B cell (primary cell): ENCODE measurements at regions of chr6 and their contacts with region 1.

Region 1: GRCh38 chr6:53171605-53172446 is 23.2 kb upstream of the GCM1 start:
- DNase-seq: peak; percentile 93
- ATAC-seq: peak; percentile 99
- H3K4me3 ChIP-seq: peak overlapping the region in 3 of 5 experiments; percentile 29 to 40 (median 34)
- H3K4me3 Mint-ChIP-seq: peak overlapping the region; percentile 65
- H3K27ac ChIP-seq: peak overlapping the region; percentile 76 to 88
- H3K27ac Mint-ChIP-seq: peak overlapping the region; percentile 81
- H3K4me1 ChIP-seq: peaks cover 28 to 30% of the 10 kb centered on the region in 2 donors
- H3K4me1 Mint-ChIP-seq: peaks cover 24% of the 10 kb centered on the region
- H3K27me3 ChIP-seq: no peaks in the 10 kb centered on the region
- H3K27me3 Mint-ChIP-seq: no peaks in the 10 kb centered on the region
- CTCF ChIP-seq: peak; percentile 100

Region 2: DNA sequence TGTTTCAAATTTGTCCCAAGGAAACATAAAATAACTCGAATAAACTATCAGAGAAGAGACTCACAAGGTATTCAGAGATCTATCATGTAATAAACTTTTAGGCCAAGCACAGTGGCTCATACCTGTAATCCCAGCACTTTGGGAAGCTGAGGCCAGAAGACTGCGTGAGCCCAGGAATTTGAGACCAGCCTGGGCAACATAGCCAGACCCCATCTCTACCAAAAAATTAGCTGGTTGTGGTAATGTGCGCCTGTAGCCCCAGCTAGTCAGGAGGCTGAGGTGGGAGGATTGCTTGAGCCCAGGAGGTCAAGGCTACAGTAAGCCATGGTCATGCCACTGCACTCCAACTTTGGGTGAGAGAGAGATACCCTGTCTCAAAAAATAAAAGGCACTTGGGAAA is 56.0 kb after region 1 on chr6:
- CTCF ChIA-PET with region 1: interaction called, 14 read pairs
- POLR2A ChIA-PET with region 1: interaction called, 8 read pairs
- intact Hi-C with region 1: no loop called
- DNase-seq: no peak
- ATAC-seq: no peak
- H3K4me3 ChIP-seq: no peak overlapping the region
- H3K4me3 Mint-ChIP-seq: no peak overlapping the region
- H3K27ac ChIP-seq: no peak overlapping the region
- H3K27ac Mint-ChIP-seq: peak overlapping the region; percentile 3
- H3K4me1 ChIP-seq: peaks cover 37% of the 10 kb centered on the region in 2 donors
- H3K4me1 Mint-ChIP-seq: peaks cover 48% of the 10 kb centered on the region
- H3K27me3 ChIP-seq: no peaks in the 10 kb centered on the region
- H3K27me3 Mint-ChIP-seq: no peaks in the 10 kb centered on the region
- CTCF ChIP-seq: no peak

Region 3: GRCh38 chr6:53263917-53264316 is 92.1 kb after region 1 on chr6:
- CTCF ChIA-PET with region 1: interaction called, 13 read pairs
- POLR2A ChIA-PET with region 1: no interaction called
- intact Hi-C with region 1: no loop called
- DNase-seq: no peak
- ATAC-seq: no peak
- H3K4me3 ChIP-seq: no peak overlapping the region
- H3K4me3 Mint-ChIP-seq: peak overlapping the region; percentile 24
- H3K27ac ChIP-seq: peak overlapping the region in 1 of 2 donors; percentile 76
- H3K27ac Mint-ChIP-seq: peak overlapping the region; percentile 91
- H3K4me1 ChIP-seq: peaks cover 31 to 41% of the 10 kb centered on the region in 2 donors
- H3K4me1 Mint-ChIP-seq: peaks cover 64% of the 10 kb centered on the region
- H3K27me3 ChIP-seq: no peaks in the 10 kb centered on the region
- H3K27me3 Mint-ChIP-seq: no peaks in the 10 kb centered on the region
- CTCF ChIP-seq: no peak

Region 4: GRCh38 chr6:53300656-53301551 is 129.1 kb after region 1 on chr6:
- CTCF ChIA-PET with region 1: interaction called, 160 read pairs
- POLR2A ChIA-PET with region 1: no interaction called
- intact Hi-C with region 1: no loop called
- DNase-seq: no peak
- ATAC-seq: peak; percentile 68
- H3K4me3 ChIP-seq: no peak overlapping the region
- H3K4me3 Mint-ChIP-seq: peak overlapping the region; percentile 71
- H3K27ac ChIP-seq: peak overlapping the region; percentile 8 to 82
- H3K27ac Mint-ChIP-seq: peak overlapping the region; percentile 89
- H3K4me1 ChIP-seq: peaks cover 74 to 79% of the 10 kb centered on the region in 2 donors
- H3K4me1 Mint-ChIP-seq: peaks cover 82% of the 10 kb centered on the region
- H3K27me3 ChIP-seq: no peaks in the 10 kb centered on the region
- H3K27me3 Mint-ChIP-seq: no peaks in the 10 kb centered on the region
- CTCF ChIP-seq: no peak

Region 5: DNA sequence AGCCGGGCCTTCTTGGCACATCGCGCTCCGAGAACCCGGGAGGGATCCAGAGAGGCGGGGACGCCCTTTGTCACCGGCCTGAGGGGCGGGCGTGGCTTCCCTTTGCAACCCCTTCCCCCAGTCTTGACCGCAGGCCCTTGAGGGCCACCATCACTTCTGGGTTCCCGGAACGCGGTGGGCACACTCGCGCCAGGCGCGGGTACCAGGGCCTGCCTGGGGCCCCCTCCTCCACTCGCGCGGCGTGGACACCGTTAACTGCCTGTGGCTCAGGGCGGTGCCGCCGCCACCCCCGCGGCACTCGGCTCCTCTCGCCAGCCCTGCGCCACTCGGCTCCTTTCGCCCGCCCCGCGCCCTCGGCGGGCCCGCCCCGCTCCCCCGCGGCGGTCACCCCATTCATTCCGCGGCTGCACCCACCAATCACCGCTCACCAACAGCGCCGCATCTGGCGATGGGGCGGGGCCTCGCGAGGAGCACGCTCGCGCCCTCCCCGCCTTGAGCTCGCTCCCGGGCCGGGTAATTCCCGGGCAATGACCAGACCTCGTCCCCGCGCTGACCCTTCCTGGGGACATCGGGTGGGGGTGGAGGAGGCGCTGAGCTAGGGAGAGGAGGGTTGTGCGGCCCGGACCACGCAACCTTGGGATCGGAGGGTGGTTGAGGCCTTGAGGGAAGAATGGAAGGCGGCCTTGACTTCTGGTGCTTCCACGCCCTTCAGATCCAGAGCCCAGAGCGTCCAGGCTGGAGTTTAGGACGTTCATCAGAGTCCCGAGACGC is 187.4 kb after region 1 on chr6:
- CTCF ChIA-PET with region 1: interaction called, 11 read pairs
- POLR2A ChIA-PET with region 1: interaction called, 4 read pairs
- intact Hi-C with region 1: loop called (anchors 1 kb)
- DNase-seq: peak; percentile 94
- ATAC-seq: peak; percentile 90
- H3K4me3 ChIP-seq: peak overlapping the region; percentile 61 to 81 (median 70)
- H3K4me3 Mint-ChIP-seq: peak overlapping the region; percentile 88
- H3K27ac ChIP-seq: peak overlapping the region; percentile 99 to 100
- H3K27ac Mint-ChIP-seq: peak overlapping the region; percentile 99
- H3K4me1 ChIP-seq: peaks cover 46 to 53% of the 10 kb centered on the region in 2 donors
- H3K4me1 Mint-ChIP-seq: peaks cover 51% of the 10 kb centered on the region
- H3K27me3 ChIP-seq: no peaks in the 10 kb centered on the region
- H3K27me3 Mint-ChIP-seq: no peaks in the 10 kb centered on the region
- CTCF ChIP-seq: no peak

Region 6: GRCh38 chr6:53484476-53485280 is 312.9 kb after region 1 on chr6:
- CTCF ChIA-PET with region 1: interaction called, 190 read pairs
- POLR2A ChIA-PET with region 1: interaction called, 9 read pairs
- intact Hi-C with region 1: loop called (anchors 1 kb)
- DNase-seq: peak; percentile 86
- ATAC-seq: peak; percentile 76
- H3K4me3 ChIP-seq: peak overlapping the region in 1 of 5 experiments; percentile 0
- H3K4me3 Mint-ChIP-seq: peak overlapping the region; percentile 13
- H3K27ac ChIP-seq: no peak overlapping the region
- H3K27ac Mint-ChIP-seq: peak overlapping the region; percentile 6
- H3K4me1 ChIP-seq: peaks cover 42 to 46% of the 10 kb centered on the region in 2 donors
- H3K4me1 Mint-ChIP-seq: peaks cover 58% of the 10 kb centered on the region
- H3K27me3 ChIP-seq: peaks cover 0 to 2% (median 0%) of the 10 kb centered on the region in 4 experiments
- H3K27me3 Mint-ChIP-seq: peaks cover 16% of the 10 kb centered on the region
- CTCF ChIP-seq: peak; percentile 99